ENCODE measurements at regions of chr6 and their contacts with region 1.

Region 1: DNA sequence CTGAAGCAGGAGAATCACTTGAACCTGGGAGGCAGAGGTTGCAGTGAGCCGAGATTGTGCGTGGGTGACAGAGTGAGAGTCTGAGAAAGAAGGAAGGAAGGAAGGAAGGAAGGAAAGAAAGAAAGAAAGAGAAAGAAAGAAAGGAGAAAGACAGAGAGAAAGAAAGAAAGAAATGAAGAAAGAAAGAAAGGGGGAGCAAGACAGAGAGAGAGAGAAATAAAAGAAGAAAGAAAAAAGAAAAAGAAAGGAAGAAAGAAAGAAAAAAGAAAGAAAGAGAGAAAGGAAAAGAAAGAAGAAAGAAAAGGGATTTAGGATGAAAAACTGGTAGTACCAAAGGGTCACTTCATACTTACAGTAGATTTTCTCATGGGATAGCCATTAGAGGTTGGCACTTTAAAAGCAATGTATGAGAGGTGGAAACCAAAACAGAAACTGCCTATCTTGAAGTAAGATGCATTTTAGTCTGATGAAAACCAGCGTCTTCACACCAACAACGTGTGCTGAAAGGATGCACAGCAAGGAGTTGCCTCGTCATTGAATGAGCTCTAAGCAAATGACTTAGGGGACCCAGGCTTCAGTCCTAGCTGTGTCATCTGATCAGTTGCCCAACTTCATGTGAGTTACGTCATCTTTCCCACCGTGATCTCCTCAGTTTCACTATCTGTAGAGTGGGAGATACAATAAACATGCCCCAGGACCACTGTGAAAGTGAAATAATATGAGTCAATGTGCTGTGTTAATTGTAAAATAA is 133.9 kb upstream of the NEDD9 start:
- DNase-seq: peak; percentile 72
- H3K4me3 Mint-ChIP-seq: peak overlapping the region; percentile 43
- H3K27ac Mint-ChIP-seq: peak overlapping the region; percentile 77
- H3K4me1 Mint-ChIP-seq: peaks cover 95% of the 10 kb centered on the region
- H3K27me3 Mint-ChIP-seq: no peaks in the 10 kb centered on the region

Region 2: GRCh38 chr6:11172501-11173332 is 193.6 kb before region 1 on chr6:
- CTCF ChIA-PET with region 1: interaction called, 3 read pairs
- POLR2A ChIA-PET with region 1: no interaction called
- intact Hi-C with region 1: loop called (anchors 5 kb)
- DNase-seq: peak; percentile 81
- H3K4me3 Mint-ChIP-seq: peak overlapping the region; percentile 16
- H3K27ac Mint-ChIP-seq: no peak overlapping the region
- H3K4me1 Mint-ChIP-seq: peaks cover 16% of the 10 kb centered on the region
- H3K27me3 Mint-ChIP-seq: no peaks in the 10 kb centered on the region

Region 3: GRCh38 chr6:11291582-11291981 is 74.8 kb before region 1 on chr6:
- CTCF ChIA-PET with region 1: no interaction called
- POLR2A ChIA-PET with region 1: no interaction called
- intact Hi-C with region 1: loop called (anchors 1 kb)
- DNase-seq: peak; percentile 50
- H3K4me3 Mint-ChIP-seq: no peak overlapping the region
- H3K27ac Mint-ChIP-seq: peak overlapping the region; percentile 56
- H3K4me1 Mint-ChIP-seq: peaks cover 27% of the 10 kb centered on the region
- H3K27me3 Mint-ChIP-seq: no peaks in the 10 kb centered on the region

Region 4: DNA sequence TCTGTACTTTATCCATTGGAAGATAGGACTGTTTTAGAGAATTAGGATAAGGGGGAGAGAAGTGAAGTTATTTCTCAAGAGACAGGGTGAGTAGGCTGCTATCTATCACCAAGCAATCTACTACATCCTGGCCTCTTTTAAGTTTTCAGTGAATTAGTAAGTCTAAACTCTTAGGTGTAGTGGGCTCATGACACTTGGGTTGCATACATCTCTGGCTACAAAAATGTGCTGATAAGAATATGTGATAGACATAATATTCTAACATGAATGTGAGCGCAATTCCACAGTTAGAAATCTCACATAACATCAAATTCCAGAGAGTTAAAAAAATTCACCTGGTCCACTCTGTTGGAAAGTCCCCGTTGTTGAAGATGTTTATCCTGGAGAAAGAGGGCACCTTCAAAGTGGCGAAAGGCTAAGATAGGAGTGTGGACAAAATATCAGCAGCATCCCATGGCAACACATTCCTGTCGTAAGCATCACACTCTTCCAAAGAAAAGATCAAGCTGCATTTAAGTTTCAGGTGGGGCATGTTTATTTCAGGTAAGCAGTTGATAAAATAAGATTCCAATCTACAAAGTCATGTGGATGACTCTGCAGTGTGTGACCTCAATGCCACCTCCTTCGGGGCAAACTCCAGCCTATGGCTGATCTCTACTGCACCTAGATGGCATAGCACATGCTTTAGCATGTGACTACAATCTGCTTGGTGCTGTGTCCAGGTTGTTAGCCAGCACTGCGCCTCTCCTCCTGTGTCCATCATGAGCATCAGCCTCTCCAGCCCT is 22.2 kb before region 1 on chr6:
- CTCF ChIA-PET with region 1: interaction called, 3 read pairs
- POLR2A ChIA-PET with region 1: interaction called, 4 read pairs
- intact Hi-C with region 1: loop called (anchors 1 kb)
- DNase-seq: no peak
- H3K4me3 Mint-ChIP-seq: no peak overlapping the region
- H3K27ac Mint-ChIP-seq: peak overlapping the region; percentile 61
- H3K4me1 Mint-ChIP-seq: peaks cover 78% of the 10 kb centered on the region
- H3K27me3 Mint-ChIP-seq: no peaks in the 10 kb centered on the region

Region 5: GRCh38 chr6:11392778-11393507 is 26.6 kb after region 1 on chr6:
- CTCF ChIA-PET with region 1: no interaction called
- POLR2A ChIA-PET with region 1: no interaction called
- intact Hi-C with region 1: no loop called
- DNase-seq: no peak
- H3K4me3 Mint-ChIP-seq: no peak overlapping the region
- H3K27ac Mint-ChIP-seq: no peak overlapping the region
- H3K4me1 Mint-ChIP-seq: no peaks in the 10 kb centered on the region
- H3K27me3 Mint-ChIP-seq: peaks cover 3% of the 10 kb centered on the region

Region 6: DNA sequence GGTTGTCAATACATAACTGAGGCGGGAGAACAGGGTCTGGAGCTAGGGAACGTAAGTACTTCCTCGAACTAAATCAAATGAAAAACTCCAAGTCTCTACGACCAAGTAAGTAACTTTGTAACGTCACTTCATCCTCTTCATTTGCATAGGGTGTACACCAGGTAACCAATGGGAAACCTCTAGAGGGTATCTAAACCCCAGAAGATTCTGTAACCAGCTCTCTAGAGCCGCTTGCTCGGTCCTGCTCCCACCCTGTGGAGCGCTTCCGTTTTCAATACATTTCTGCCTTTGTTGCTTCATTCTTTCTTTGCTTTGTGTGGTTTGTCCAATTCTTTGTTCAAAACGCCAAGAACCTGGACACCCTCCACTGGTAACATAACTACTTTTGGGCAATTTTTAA is 37.7 kb after region 1 on chr6:
- CTCF ChIA-PET with region 1: no interaction called
- POLR2A ChIA-PET with region 1: no interaction called
- intact Hi-C with region 1: no loop called
- DNase-seq: no peak
- H3K4me3 Mint-ChIP-seq: no peak overlapping the region
- H3K27ac Mint-ChIP-seq: no peak overlapping the region
- H3K4me1 Mint-ChIP-seq: peaks cover under 1% of the 10 kb centered on the region
- H3K27me3 Mint-ChIP-seq: no peaks in the 10 kb centered on the region

Region 7: GRCh38 chr6:11414176-11414963 is 48.0 kb after region 1 on chr6:
- CTCF ChIA-PET with region 1: interaction called, 5 read pairs
- POLR2A ChIA-PET with region 1: no interaction called
- intact Hi-C with region 1: loop called (anchors 1 kb)
- DNase-seq: peak; percentile 63
- H3K4me3 Mint-ChIP-seq: no peak overlapping the region
- H3K27ac Mint-ChIP-seq: no peak overlapping the region
- H3K4me1 Mint-ChIP-seq: peaks cover 48% of the 10 kb centered on the region
- H3K27me3 Mint-ChIP-seq: no peaks in the 10 kb centered on the region

Region 8: DNA sequence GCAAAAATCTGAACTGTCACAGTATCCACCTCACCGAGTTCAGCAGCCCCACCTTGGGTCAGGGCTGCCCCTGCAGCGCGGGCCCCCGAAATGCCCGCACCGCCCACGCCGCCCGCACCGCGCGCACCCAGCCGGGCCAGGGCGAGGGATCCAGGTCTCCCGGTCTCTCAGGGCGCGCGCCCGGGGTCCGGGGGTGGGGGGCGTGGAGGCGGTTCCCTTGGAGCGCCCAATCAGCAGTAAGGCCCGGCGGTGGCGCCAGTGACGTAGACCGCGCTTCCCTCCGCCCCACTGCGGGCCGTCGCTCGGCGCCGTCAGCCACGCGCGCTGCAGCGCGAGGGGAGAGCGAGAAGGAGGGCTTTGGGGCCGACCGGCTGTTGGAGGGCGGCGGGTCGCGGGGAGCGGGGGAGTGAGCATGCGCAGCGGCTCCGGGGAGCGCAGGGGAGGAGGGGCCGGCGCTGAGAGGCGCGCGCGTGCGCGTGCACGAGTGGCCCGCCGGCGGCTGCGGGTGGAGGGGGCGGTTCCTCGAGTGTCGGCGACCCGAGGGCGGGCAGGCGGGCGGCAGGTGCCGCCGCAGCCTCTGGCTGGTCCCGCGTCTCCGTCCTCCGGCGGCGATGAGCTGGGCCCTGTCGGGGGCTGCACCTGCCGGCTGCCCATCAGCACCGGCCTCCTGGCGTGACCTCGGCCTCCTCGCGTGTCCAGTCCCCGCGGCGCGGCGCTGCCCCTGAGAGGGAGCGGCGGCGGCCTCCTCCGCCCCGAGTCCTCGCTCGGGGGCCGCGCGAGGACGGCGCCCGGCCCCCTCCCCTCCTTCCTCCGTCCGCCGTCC is 171.1 kb after region 1 on chr6 and contains the start of gene TMEM170B:
- CTCF ChIA-PET with region 1: no interaction called
- POLR2A ChIA-PET with region 1: no interaction called
- intact Hi-C with region 1: loop called (anchors 5 kb)
- DNase-seq: peak; percentile 94
- H3K4me3 Mint-ChIP-seq: peak within 1 kb of the TSS; percentile 73
- H3K27ac Mint-ChIP-seq: no peak within 1 kb of the TSS
- H3K4me1 Mint-ChIP-seq: peaks cover 9% of the 10 kb centered on the region
- H3K27me3 Mint-ChIP-seq: peaks cover 14% of the 10 kb centered on the region
- total RNA-seq, gene TMEM170B: 0.83 to 1.1 TPM